Ovary (tissue), 10 donors: ENCODE measurements at regions of chr17 and their contacts with region 1.

Region 1: DNA sequence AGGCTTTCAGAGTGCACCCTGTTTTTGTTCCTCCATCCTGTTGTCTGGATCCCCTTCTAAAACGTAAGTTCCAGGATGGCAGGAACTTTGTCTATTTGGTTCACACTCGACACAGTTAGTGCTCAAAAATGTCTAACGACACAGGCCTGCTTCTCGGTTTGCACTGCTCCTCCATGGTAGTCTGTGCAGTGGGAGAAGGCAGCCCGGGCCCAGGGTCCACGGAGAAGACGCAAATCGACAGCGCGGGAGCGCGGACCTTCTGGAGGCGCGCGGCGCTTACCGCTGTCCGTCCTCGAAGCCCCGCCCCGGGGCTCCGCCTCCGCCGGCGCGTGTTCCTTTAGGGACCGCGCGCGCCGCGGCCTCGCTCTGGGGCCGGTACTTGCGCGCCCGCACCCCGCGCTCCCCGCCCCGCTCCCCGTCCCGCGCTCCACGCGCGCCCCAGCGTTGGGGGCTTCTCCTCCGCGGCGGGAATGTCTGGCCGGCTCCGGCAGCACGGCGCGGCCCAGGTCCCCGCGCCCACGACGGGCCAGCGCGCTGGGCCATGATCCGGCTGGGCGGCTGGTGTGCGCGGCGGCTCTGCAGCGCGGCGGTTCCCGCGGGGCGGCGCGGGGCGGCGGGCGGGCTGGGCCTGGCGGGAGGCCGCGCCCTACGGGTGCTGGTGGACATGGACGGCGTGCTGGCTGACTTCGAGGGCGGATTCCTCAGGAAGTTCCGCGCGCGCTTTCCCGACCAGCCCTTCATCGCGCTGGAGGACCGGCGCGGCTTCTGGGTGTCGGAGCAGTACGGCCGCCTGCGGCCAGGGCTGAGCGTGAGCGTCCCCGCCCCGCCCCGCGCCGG is at the start of gene NT5M:
- DNase-seq: peak; percentile 70 to 85 (median 78)
- H3K4me3 ChIP-seq: peak within 1 kb of the TSS; percentile 43
- H3K27ac ChIP-seq: peak within 1 kb of the TSS; percentile 2 to 67
- H3K4me1 ChIP-seq: no peaks in the 10 kb centered on the region
- H3K27me3 ChIP-seq: no peaks in the 10 kb centered on the region
- CTCF ChIP-seq: no peak
- EP300 ChIP-seq: no peak
- POLR2A ChIP-seq: no peak
- total RNA-seq, gene NT5M: 3.8 to 6.6 (median 5.2) TPM

Region 2: DNA sequence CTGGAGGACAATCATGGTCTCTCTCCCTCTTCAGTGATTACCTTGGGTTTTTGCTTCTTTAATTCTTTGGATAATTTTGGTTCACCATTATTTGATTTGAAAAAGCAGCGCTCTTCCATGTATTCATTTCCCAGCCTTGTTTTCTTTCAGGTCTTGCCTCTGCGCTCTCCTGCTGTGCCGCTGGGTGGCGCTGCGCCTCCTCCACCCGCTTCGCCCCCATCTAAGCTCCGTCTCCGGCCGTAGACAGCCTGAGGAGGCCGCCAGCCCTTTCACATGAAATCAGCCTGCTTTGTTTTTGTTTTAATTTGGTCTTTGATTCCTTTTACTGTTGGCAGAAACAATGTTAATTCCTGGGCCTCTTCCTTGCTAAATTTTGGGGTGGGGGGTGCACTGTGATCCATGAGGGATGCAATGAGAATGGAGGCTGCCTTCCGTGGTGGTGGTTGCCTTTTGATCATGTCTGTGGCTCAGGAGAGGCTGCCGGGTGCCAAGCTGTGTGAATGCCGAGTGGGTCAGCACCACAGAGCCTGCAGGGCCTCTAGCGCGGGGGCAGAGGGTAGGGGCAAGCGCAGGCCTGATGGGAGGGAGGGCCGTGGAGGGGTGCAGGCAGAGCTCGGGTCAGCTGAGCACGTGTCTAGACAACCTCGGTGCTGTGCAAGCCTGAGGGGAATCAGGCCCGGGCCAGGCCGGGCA is 161.2 kb before region 1 on chr17:
- intact Hi-C with region 1: loop called in 1 of 4 experiments (anchors 10 kb)
- DNase-seq: peak; percentile 55 to 84 (median 64)
- H3K4me3 ChIP-seq: no peak overlapping the region
- H3K27ac ChIP-seq: peak overlapping the region in 1 of 2 donors; percentile 21
- H3K4me1 ChIP-seq: no peaks in the 10 kb centered on the region
- H3K27me3 ChIP-seq: no peaks in the 10 kb centered on the region
- CTCF ChIP-seq: peak; percentile 61 to 63 (median 62)
- EP300 ChIP-seq: no peak
- POLR2A ChIP-seq: no peak